Activated CD4-positive, alpha-beta T cell treated with anti-CD3 and anti-CD28 coated beads for 36 hours (primary cell): ENCODE measurements at regions of chr10 and their contacts with region 1.

Region 1: GRCh38 chr10:13299437-13300287 is at the start of gene PHYH:
- DNase-seq: peak; percentile 87
- ATAC-seq: peak; percentile 65
- H3K4me3 Mint-ChIP-seq: peak within 1 kb of the TSS; percentile 80
- H3K27ac Mint-ChIP-seq: peak within 1 kb of the TSS; percentile 88
- H3K4me1 Mint-ChIP-seq: peaks cover 18% of the 10 kb centered on the region
- H3K27me3 Mint-ChIP-seq: no peaks in the 10 kb centered on the region
- total RNA-seq, gene PHYH: 11.7 to 12.8 TPM

Region 2: DNA sequence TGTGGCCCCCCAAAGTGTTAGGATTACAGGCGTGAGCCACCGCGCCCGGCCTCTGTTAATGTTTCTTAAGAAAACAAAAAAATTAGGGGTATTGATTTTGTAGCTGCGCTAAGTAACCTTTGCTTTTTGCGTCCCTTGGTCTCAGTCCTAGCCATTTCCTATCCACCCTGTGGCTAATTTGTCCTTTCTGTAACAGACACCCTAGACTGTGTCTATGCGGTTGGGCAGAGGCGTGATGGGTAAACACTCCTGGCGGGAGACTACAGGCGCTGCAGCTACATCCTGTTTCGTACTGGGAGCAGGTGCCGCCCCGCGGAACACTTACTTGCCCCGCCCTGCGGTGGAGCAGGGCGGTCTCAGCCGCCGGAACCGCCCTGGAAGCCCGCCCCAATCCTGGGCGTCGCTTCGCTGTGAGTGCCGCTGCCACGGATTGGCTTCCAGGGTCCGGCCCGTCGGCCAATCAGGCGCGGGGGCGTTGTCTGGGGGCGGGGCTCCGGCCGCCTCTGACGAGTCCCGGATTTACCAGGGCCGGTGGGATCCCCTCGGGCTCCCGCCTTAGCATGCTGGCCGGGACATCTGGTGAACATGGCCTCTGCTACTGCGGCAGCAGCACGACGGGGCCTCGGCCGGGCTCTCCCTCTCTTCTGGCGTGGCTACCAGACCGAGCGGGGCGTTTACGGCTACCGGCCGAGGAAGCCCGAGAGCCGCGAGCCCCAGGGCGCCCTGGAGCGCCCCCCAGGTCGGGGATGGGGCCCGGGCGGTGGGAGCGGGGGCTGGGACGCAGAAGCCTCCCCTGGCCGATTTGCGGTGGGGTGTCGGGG is 1231.0 kb before region 1 on chr10 and contains the start of gene DHTKD1:
- CTCF ChIA-PET with region 1: no interaction called
- POLR2A ChIA-PET with region 1: no interaction called
- intact Hi-C with region 1: loop called in 1 of 2 experiments (anchors 1 kb)
- DNase-seq: peak; percentile 99
- ATAC-seq: peak; percentile 99
- H3K4me3 Mint-ChIP-seq: peak within 1 kb of the TSS; percentile 81
- H3K27ac Mint-ChIP-seq: peak within 1 kb of the TSS; percentile 93
- H3K4me1 Mint-ChIP-seq: peaks cover 22% of the 10 kb centered on the region
- H3K27me3 Mint-ChIP-seq: no peaks in the 10 kb centered on the region
- total RNA-seq, gene DHTKD1: 13.0 to 15.5 TPM

Region 3: DNA sequence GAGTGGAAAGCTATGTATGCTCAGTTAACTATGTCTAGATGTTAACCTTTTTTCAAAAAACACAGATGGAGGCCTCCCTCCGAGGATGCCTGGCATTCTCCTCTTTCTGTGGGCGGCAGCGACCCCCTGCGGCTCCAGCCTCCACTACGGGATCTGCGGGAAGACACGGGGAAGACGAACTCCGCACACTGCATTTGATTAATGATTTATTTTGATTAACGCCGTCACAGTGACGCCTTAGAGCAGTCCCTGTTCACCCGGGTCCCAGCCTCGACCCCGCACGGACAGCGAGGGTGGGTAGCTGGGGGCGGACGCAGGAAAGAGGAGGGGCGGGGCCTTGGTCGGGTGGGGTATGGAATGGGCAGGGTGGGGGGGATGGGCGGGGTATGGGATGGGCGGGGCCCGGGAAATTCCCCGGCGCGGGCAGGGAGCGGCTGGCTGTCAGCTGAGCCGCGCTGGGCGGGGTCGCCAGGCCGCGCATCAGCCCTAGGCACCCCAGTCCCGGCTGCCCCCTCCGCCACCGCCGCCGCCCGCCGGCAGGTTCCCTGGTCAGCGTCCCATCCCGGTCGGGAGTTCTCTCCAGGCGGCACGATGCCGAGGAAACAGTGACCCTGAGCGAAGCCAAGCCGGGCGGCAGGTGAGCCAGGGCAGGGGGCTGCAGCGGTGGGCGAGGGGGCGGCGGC is 199.9 kb before region 1 on chr10 and contains the start of gene OPTN:
- CTCF ChIA-PET with region 1: no interaction called
- POLR2A ChIA-PET with region 1: interaction called, 4 read pairs
- intact Hi-C with region 1: loop called (anchors 1 to 5 kb)
- DNase-seq: peak; percentile 87
- ATAC-seq: peak; percentile 80
- H3K4me3 Mint-ChIP-seq: peak within 1 kb of the TSS; percentile 84
- H3K27ac Mint-ChIP-seq: peak within 1 kb of the TSS; percentile 90
- H3K4me1 Mint-ChIP-seq: peaks cover 37% of the 10 kb centered on the region
- H3K27me3 Mint-ChIP-seq: no peaks in the 10 kb centered on the region
- total RNA-seq, gene OPTN: 57.4 to 67.8 TPM

Region 4: GRCh38 chr10:13206546-13207443 is 92.9 kb before region 1 on chr10:
- CTCF ChIA-PET with region 1: interaction called, 5 read pairs
- POLR2A ChIA-PET with region 1: interaction called, 13 read pairs
- intact Hi-C with region 1: loop called in 1 of 2 experiments (anchors 2 kb)
- DNase-seq: no peak
- ATAC-seq: no peak
- H3K4me3 Mint-ChIP-seq: no peak overlapping the region
- H3K27ac Mint-ChIP-seq: no peak overlapping the region
- H3K4me1 Mint-ChIP-seq: no peaks in the 10 kb centered on the region
- H3K27me3 Mint-ChIP-seq: no peaks in the 10 kb centered on the region

Region 5: DNA sequence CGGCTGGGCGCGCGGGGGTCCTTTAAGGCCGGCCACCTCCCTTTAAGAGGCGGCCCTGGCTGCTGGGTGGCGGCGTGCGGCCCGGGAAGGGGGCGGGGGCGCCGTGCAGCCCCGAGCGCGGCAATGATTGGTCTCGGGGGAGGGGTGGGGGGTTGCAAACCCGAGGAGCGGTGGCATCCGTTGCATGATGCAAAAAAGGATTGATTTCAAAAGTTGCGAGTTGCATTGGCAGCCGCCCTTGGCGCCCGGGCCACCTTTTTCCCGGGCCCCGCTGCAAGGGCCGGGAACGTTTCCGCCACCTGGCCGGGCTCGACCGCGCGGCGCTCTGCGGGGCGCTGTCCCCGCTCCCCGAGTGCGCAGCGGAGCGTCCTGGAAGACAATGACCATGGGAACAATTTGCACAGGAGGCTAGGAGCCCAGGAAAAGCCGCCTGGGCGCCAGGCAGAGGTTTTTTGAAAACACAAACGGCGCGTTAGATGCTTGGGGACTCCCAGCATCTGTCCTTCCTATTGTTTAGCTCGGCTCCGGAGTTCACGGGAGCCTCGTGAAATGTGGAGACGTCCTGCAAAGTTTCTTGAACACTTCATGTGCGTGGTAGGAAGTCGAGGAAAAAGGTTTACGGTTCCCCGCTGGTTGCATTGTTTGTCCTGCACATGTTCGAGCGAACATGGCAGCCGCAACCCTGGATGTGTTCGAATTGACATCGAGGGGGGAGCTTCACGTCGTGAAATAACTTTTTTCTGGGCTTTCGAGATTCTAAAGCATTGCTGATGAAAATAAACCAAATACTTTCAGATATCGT is 48.8 kb after region 1 on chr10 and contains the start of gene SEPHS1:
- CTCF ChIA-PET with region 1: interaction called, 12 read pairs
- POLR2A ChIA-PET with region 1: interaction called, 6 read pairs
- intact Hi-C with region 1: loop called (anchors 1 kb)
- DNase-seq: peak; percentile 93
- ATAC-seq: peak; percentile 77
- H3K4me3 Mint-ChIP-seq: peak within 1 kb of the TSS; percentile 87
- H3K27ac Mint-ChIP-seq: peak within 1 kb of the TSS; percentile 95
- H3K4me1 Mint-ChIP-seq: peaks cover 57% of the 10 kb centered on the region
- H3K27me3 Mint-ChIP-seq: no peaks in the 10 kb centered on the region
- total RNA-seq, gene SEPHS1: 74.5 to 74.7 TPM

Region 6: GRCh38 chr10:13365243-13365642 is 65.6 kb after region 1 on chr10:
- CTCF ChIA-PET with region 1: no interaction called
- POLR2A ChIA-PET with region 1: no interaction called
- intact Hi-C with region 1: no loop called
- DNase-seq: no peak
- ATAC-seq: no peak
- H3K4me3 Mint-ChIP-seq: no peak overlapping the region
- H3K27ac Mint-ChIP-seq: no peak overlapping the region
- H3K4me1 Mint-ChIP-seq: no peaks in the 10 kb centered on the region
- H3K27me3 Mint-ChIP-seq: no peaks in the 10 kb centered on the region

Region 7: DNA sequence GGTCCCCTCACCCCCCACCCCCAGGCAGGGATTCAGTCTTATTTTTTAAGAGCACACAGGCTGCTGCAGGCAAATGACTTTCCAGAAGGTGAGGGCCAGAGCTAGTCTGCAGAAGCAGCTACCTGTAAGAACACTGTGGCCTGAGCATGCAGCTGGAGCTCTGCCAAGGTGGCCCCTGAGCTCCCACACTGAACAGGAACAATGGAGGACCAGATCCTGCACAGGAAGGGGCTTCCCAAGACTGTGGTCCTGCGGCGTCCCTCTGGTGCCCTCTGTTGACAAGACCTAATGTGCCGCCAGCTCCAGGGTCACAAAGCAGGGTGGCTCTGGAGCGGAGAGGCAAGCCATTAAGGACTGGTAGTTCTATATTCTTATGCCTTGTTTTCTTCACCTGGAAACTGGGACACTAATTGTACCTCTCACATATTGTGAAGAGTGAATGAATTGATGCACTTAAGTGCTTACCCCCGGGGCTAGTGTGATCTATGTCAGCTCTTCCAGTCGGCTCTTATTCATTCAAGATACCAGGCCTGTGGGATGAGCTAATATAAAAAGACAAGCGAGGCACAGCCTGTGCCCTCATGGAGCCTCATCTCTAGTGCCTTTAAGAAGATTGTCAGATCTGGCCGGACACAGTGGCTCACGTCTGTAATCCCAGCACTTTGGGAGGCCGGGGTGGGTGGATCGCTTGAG is 237.2 kb after region 1 on chr10:
- CTCF ChIA-PET with region 1: no interaction called
- POLR2A ChIA-PET with region 1: no interaction called
- intact Hi-C with region 1: no loop called
- DNase-seq: peak; percentile 66
- ATAC-seq: peak; percentile 76
- H3K4me3 Mint-ChIP-seq: no peak overlapping the region
- H3K27ac Mint-ChIP-seq: no peak overlapping the region
- H3K4me1 Mint-ChIP-seq: no peaks in the 10 kb centered on the region
- H3K27me3 Mint-ChIP-seq: peaks cover 47% of the 10 kb centered on the region

Region 8: DNA sequence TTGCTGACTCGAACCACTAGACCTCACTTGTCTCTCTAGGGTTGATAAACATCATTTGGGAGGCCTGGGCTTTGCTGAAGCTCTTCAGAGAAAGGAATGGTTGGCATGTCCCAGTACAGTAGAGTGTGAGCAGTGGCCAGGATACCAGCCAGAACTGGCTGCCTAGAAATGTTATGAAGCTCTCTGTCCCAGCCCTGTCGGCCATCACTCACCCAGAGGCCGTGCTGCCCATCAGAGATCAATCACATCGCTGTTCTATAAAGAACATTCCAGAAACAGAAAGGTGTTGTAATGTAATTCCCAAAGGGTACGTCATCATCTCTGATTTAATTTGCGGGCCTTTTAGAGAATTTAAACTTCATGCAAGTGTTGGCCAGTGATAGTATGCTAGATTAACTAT is 398.6 kb after region 1 on chr10:
- CTCF ChIA-PET with region 1: no interaction called
- POLR2A ChIA-PET with region 1: no interaction called
- intact Hi-C with region 1: no loop called
- DNase-seq: no peak
- ATAC-seq: no peak
- H3K4me3 Mint-ChIP-seq: no peak overlapping the region
- H3K27ac Mint-ChIP-seq: no peak overlapping the region
- H3K4me1 Mint-ChIP-seq: no peaks in the 10 kb centered on the region
- H3K27me3 Mint-ChIP-seq: peaks cover 2% of the 10 kb centered on the region